ENCODE measurements at regions of chr4 and their contacts with region 1.

Region 1: DNA sequence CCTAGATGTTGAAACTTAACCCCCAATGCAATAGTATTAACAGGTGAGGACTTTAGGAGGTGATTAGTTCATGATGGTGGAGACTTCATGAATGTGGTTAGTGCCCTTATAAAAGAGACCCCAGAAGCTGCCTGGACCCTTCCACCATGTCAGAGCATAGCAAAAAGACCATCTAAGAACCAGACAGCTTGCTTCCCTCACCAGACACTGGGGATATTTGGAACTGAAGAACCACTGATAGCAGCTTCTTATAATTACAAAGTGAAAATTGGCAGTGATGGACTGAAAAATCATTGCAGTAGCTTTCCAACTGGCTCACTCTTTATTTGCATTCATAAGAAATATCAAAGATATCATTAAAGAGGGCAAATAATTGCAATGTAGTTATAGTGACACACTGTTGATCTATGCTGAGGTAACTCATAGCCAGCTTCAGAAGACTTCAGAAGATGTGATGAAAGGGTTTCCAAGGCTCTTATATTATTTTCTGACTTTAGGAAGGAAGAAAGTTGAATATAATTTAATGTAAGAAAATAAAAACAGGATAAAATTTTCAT is 5.8 kb downstream of the RASSF6 start:
- DNase-seq: no peak
- ATAC-seq: no peak
- H3K4me3 ChIP-seq: no peak overlapping the region
- H3K27ac ChIP-seq: no peak overlapping the region
- H3K4me1 ChIP-seq: no peaks in the 10 kb centered on the region
- H3K27me3 ChIP-seq: no peaks in the 10 kb centered on the region
- CTCF ChIP-seq: no peak
- EP300 ChIP-seq: no peak
- POLR2A ChIP-seq: no peak
- RAD21 ChIP-seq: no peak

Region 2: DNA sequence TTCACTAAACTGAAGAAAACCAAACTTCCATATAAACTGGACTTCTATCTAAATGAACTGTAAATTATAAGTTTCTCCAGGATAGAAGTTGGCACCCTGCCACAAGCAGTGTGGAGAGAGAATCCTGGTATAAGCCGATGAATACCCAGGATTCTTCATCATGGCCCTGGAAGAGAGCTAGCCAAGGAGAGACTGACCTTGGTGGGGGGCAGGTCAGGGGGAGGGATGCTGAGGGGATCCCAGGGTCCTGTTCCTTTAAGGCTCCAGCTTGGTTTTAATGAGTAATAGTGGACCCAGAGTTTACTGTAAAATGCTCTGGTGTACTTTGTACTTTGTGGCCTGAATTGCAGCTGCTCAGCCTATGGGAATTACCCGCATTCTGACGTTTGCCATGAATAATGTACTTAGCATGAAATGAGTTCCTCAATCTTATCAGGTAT is 11.1 kb before region 1 on chr4:
- CTCF ChIA-PET with region 1: interaction called, 17 read pairs
- POLR2A ChIA-PET with region 1: interaction called, 52 read pairs
- RAD21 ChIA-PET with region 1: interaction called, 39 read pairs
- SMC1A ChIA-PET with region 1: interaction called, 146 read pairs
- in situ Hi-C with region 1: no loop called
- intact Hi-C with region 1: no loop called
- DNase-seq: no peak
- ATAC-seq: peak; percentile 76
- H3K4me3 ChIP-seq: no peak overlapping the region
- H3K27ac ChIP-seq: no peak overlapping the region
- H3K4me1 ChIP-seq: peaks cover 16% of the 10 kb centered on the region
- H3K27me3 ChIP-seq: no peaks in the 10 kb centered on the region
- CTCF ChIP-seq: no peak
- EP300 ChIP-seq: peak; percentile 89 to 90; a peak in 3 of 4 replicates
- POLR2A ChIP-seq: no peak
- RAD21 ChIP-seq: no peak

Region 3: DNA sequence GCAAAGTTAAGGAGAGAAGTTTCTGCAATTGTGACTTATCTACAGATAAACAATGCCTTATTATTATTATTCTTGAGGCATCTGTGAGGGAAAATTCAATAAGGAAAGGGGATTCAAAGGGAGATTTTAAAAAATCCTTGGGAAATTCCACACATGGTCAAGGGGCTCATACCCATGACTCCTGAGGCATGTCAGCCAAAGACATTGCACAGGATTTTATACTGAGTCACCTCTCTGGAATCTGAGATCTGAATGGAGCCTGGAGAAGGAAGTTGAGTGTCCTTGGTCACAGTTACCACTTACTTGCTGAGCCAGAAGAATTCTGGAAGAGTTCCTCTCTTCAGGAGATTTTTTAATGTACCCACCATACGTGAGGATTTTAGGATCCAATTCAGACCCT is 111.6 kb after region 1 on chr4:
- CTCF ChIA-PET with region 1: no interaction called
- POLR2A ChIA-PET with region 1: no interaction called
- RAD21 ChIA-PET with region 1: no interaction called
- SMC1A ChIA-PET with region 1: no interaction called
- in situ Hi-C with region 1: no loop called
- intact Hi-C with region 1: no loop called
- DNase-seq: no peak
- ATAC-seq: no peak
- H3K4me3 ChIP-seq: no peak overlapping the region
- H3K27ac ChIP-seq: no peak overlapping the region
- H3K4me1 ChIP-seq: 0 out of 2 replicates have a peak, but pooled peaks cover 4% of the 10 kb centered on the region
- H3K27me3 ChIP-seq: no peaks in the 10 kb centered on the region
- CTCF ChIP-seq: no peak
- EP300 ChIP-seq: no peak
- POLR2A ChIP-seq: no peak
- RAD21 ChIP-seq: no peak

Measured in GM12878 (cell line).